ENCODE measurements at regions of chr2 and their contacts with region 1.

Region 1: DNA sequence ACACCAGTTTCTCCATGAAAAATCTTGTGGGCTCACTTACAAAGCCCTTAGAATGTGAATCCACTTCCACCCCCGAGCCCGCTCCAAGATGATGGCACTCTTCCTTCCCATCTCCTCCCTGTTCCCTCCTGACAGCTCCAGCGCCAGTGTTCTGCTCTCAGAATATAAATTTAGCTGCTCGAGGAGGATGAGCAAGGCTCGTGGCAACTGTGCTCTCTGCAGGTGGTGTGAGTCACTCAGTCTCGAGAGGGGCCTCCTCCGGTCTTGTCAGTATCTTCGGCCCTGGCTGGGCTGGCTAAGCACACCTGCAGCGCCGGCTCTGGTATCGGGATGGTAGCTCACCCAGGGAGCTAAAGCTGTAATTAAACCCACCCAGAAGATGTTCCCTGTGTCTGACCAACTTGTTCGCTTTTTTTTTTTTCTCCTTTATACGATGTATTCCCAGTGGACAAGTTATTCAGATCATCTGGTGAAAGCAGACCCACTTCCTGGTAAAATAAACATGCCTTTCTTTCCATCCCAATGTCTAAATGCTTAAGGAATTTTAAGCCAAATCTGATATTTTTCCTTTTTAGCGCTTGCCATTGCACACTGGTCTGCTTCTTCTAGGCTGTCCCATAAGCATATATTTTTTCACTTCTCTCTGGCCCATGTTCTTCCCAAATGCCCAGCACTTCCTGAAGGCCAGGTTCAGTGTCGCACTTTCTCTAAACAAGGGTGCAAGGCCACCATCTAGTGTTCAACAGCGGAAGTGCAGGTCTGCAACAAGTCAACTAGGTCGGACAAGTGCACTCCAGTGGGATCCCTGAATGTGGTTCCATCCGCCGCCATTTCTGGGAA is 31.4 kb upstream of the YPEL5 start:
- DNase-seq: peak; percentile 20
- ATAC-seq: peak; percentile 89
- H3K4me3 ChIP-seq: no peak overlapping the region
- H3K27ac ChIP-seq: no peak overlapping the region
- H3K4me1 ChIP-seq: no peaks in the 10 kb centered on the region
- H3K27me3 ChIP-seq: no peaks in the 10 kb centered on the region; a peak in 2 of 4 replicates
- CTCF ChIP-seq: peak; percentile 87 to 95 (median 92)
- EP300 ChIP-seq: no peak
- POLR2A ChIP-seq: no peak
- RAD21 ChIP-seq: peak; percentile 79

Region 2: GRCh38 chr2:30098266-30099005 is 16.9 kb before region 1 on chr2:
- CTCF ChIA-PET with region 1: interaction called, 11 read pairs
- POLR2A ChIA-PET with region 1: interaction called, 3 read pairs
- RAD21 ChIA-PET with region 1: interaction called, 3 read pairs
- SMC1A ChIA-PET with region 1: interaction called, 11 read pairs
- in situ Hi-C with region 1: no loop called
- intact Hi-C with region 1: no loop called
- DNase-seq: no peak
- ATAC-seq: no peak
- H3K4me3 ChIP-seq: no peak overlapping the region
- H3K27ac ChIP-seq: no peak overlapping the region
- H3K4me1 ChIP-seq: no peaks in the 10 kb centered on the region
- H3K27me3 ChIP-seq: peaks cover 0 to 6% of the 10 kb centered on the region in 2 experiments; a peak in 1 of 4 replicates
- CTCF ChIP-seq: no peak
- EP300 ChIP-seq: no peak
- POLR2A ChIP-seq: no peak
- RAD21 ChIP-seq: no peak

Region 3: GRCh38 chr2:30139131-30139870 is 23.9 kb after region 1 on chr2:
- CTCF ChIA-PET with region 1: interaction called, 10 read pairs
- POLR2A ChIA-PET with region 1: no interaction called
- RAD21 ChIA-PET with region 1: no interaction called
- SMC1A ChIA-PET with region 1: interaction called, 6 read pairs
- in situ Hi-C with region 1: no loop called
- intact Hi-C with region 1: no loop called
- DNase-seq: no peak
- ATAC-seq: peak; percentile 89
- H3K4me3 ChIP-seq: no peak overlapping the region
- H3K27ac ChIP-seq: no peak overlapping the region
- H3K4me1 ChIP-seq: 0 out of 2 replicates have a peak, but pooled peaks cover 3% of the 10 kb centered on the region
- H3K27me3 ChIP-seq: no peaks in the 10 kb centered on the region
- CTCF ChIP-seq: no peak; a peak in 1 of 6 replicates
- EP300 ChIP-seq: no peak
- POLR2A ChIP-seq: no peak
- RAD21 ChIP-seq: 0 out of 2 replicates have a peak, but pooled peaks have one; percentile 16